HCT116 (cell line): ENCODE measurements at regions of chr11 and their contacts with region 1.

Region 1: DNA sequence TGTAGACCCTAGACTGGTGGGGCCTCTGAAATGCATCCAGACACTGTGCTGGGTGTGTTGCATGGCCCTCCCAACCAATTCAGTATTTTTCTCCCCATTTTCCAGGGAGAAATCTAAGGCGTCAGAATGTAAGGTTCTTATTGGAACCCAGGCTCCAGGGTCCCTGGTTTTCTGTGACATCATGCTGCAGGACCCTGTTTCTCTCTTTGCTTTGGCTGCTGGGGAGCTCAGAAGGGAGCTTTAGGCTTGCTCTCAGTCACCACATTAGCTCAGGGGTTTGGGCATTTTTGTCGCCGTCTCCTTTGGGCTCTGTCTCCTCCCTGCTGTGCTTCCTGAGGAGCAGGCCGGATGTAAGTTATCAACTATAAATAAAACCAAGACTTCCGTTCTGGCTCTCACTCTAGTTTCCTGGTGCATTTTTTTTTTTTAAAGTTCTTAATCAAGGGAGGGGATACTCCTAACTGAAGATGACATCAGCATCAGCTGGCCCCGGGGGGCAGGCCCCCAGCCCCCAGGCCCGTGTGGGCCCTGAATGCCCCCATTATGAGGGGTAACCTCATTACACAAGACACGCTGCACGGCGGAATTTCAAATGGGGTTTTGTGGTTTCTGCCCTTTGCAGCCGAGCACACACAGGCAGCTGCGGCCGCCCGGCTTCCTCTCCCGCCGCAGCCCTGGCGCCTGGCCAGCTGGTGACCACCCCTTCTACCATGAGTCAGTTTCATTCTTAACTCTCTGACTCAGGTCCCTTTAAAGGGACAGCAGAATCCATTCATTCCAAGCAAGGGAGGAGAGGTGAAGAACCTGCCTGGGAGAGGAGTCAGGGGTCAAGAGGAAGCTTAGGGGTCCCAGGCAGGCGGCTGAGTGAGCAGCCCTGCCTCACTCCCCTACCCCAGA is 3.2 kb downstream of the MYEOV start:
- DNase-seq: peak; percentile 97
- ATAC-seq: peak; percentile 27
- H3K4me3 ChIP-seq: peak overlapping the region; percentile 94 to 97
- H3K27ac ChIP-seq: peak overlapping the region; percentile 99
- H3K4me1 ChIP-seq: peaks cover 72 to 88% of the 10 kb centered on the region in 2 experiments
- H3K27me3 ChIP-seq: no peaks in the 10 kb centered on the region
- CTCF ChIP-seq: no peak
- POLR2A ChIP-seq: peak; percentile 15
- RAD21 ChIP-seq: no peak

Region 2: GRCh38 chr11:69122642-69123431 is 174.3 kb before region 1 on chr11:
- CTCF ChIA-PET with region 1: no interaction called
- POLR2A ChIA-PET with region 1: interaction called, 9 read pairs
- RAD21 ChIA-PET with region 1: interaction called in 1 of 2 experiments, 3 read pairs
- intact Hi-C with region 1: loop called (anchors 2 kb)
- DNase-seq: peak; percentile 92
- ATAC-seq: peak; percentile 88
- H3K4me3 ChIP-seq: peak overlapping the region; percentile 29 to 54
- H3K27ac ChIP-seq: peak overlapping the region; percentile 98
- H3K4me1 ChIP-seq: peaks cover 45 to 69% of the 10 kb centered on the region in 2 experiments
- H3K27me3 ChIP-seq: no peaks in the 10 kb centered on the region
- CTCF ChIP-seq: no peak
- POLR2A ChIP-seq: no peak
- RAD21 ChIP-seq: no peak

Region 3: DNA sequence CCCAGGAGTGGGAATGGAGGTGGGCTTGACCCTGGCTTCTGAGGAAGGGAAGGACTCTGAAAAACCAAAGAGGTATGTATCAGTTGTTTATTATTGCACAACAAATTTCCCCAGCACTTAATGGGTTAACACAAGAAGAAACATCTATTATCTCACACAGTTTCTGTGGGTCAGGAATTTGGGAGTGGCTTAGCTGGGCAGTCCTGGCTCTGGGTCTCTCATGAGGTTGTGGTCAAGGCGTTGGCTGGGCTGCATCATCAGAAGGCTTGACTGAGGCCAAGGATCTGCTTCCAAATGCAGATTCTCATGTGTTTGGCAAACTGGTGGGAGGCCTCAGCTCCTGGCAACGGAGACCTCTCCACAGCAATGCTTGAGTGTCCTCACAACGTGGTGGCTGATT is 158.9 kb before region 1 on chr11:
- CTCF ChIA-PET with region 1: no interaction called
- POLR2A ChIA-PET with region 1: no interaction called
- RAD21 ChIA-PET with region 1: no interaction called
- intact Hi-C with region 1: loop called (anchors 5 kb)
- DNase-seq: peak; percentile 54
- ATAC-seq: peak; percentile 90
- H3K4me3 ChIP-seq: peak overlapping the region in 1 of 2 experiments; percentile 34; a peak in 2 of 4 replicates
- H3K27ac ChIP-seq: peak overlapping the region; percentile 13; the same call in 1 of the 2 replicates
- H3K4me1 ChIP-seq: peaks cover 24 to 31% of the 10 kb centered on the region in 2 experiments
- H3K27me3 ChIP-seq: no peaks in the 10 kb centered on the region
- CTCF ChIP-seq: no peak
- POLR2A ChIP-seq: no peak
- RAD21 ChIP-seq: no peak

Region 4: DNA sequence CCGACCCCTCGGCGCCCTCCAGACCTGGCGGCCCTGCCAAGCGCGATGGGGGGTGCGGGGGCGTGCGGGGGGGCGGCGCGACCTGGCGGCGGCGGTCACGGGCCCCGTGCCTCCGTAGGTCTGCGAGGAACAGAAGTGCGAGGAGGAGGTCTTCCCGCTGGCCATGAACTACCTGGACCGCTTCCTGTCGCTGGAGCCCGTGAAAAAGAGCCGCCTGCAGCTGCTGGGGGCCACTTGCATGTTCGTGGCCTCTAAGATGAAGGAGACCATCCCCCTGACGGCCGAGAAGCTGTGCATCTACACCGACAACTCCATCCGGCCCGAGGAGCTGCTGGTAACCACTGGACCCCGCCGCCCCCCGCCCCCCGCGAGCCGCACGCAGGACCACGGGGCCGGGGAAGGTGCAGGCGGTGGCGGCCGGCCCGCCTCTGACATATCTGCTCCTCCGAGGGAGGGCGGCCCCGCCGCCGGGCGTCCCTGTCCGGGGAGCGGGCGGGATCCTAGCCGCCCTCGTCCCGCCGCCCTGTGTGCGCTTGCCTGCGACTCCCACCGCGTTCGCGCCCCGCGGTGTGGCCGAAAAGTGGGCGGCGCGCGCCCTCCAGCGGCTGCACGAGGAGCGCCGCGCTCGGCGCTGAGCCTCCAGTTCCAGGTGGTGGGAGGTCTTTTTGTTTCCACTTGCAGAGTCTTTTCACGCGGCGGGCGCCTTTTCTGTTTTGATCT is 345.9 kb after region 1 on chr11:
- CTCF ChIA-PET with region 1: interaction called, 4 read pairs
- POLR2A ChIA-PET with region 1: interaction called, 15 read pairs
- RAD21 ChIA-PET with region 1: interaction called, 5 to 7 read pairs
- intact Hi-C with region 1: loop called (anchors 1 kb)
- DNase-seq: no peak
- ATAC-seq: peak; percentile 2; the same call in 1 of the 2 replicates
- H3K4me3 ChIP-seq: peak overlapping the region; percentile 96 to 99
- H3K27ac ChIP-seq: peak overlapping the region; percentile 96
- H3K4me1 ChIP-seq: peaks cover 10 to 63% of the 10 kb centered on the region in 2 experiments
- H3K27me3 ChIP-seq: no peaks in the 10 kb centered on the region
- CTCF ChIP-seq: peak in 2 of 3 experiments; percentile 76; a peak in 4 of 6 replicates
- POLR2A ChIP-seq: no peak
- RAD21 ChIP-seq: no peak